Endothelial cell of umbilical vein (primary cell): ENCODE measurements at regions of chr7 and their contacts with region 1.

Region 1: GRCh38 chr7:64951250-64951848 is 39.5 kb downstream of the ZNF117 start:
- DNase-seq: peak; percentile 55
- H3K4me3 ChIP-seq: no peak overlapping the region
- H3K27ac ChIP-seq: no peak overlapping the region
- H3K4me1 ChIP-seq: no peaks in the 10 kb centered on the region
- H3K27me3 ChIP-seq: peaks cover 16 to 24% of the 10 kb centered on the region in 2 experiments
- CTCF ChIP-seq: peak; percentile 48 to 58
- POLR2A ChIP-seq: no peak

Region 2: DNA sequence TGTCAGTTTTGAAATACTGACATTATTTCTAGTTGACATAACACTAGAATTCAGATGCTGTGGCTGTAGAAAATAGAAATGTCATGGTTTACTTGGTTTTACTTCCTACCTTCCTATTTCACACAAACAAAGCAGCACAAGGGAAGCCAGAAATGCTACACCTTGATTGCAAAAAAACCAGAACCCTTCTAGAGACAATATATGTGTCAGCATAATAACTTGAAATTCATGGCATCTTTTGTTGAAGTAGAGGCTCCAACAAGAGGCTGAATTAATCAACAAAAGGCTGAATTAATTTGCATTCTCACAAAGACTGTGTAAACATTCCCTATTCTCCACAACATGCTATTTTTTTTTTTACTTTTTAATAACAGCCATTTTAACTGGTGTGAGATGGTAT is 14.2 kb after region 1 on chr7:
- CTCF ChIA-PET with region 1: no interaction called
- POLR2A ChIA-PET with region 1: no interaction called
- dilution Hi-C with region 1: no loop called
- intact Hi-C with region 1: no loop called
- DNase-seq: no peak
- H3K4me3 ChIP-seq: no peak overlapping the region
- H3K27ac ChIP-seq: no peak overlapping the region
- H3K4me1 ChIP-seq: no peaks in the 10 kb centered on the region
- H3K27me3 ChIP-seq: no peaks in the 10 kb centered on the region
- CTCF ChIP-seq: no peak
- POLR2A ChIP-seq: no peak

Region 3: GRCh38 chr7:65307651-65308299 is 356.4 kb after region 1 on chr7:
- CTCF ChIA-PET with region 1: interaction called, 68 read pairs
- POLR2A ChIA-PET with region 1: no interaction called
- dilution Hi-C with region 1: no loop called
- intact Hi-C with region 1: loop called (anchors 1 kb)
- DNase-seq: peak; percentile 68
- H3K4me3 ChIP-seq: no peak overlapping the region
- H3K27ac ChIP-seq: no peak overlapping the region
- H3K4me1 ChIP-seq: no peaks in the 10 kb centered on the region
- H3K27me3 ChIP-seq: peaks cover 0 to 1% of the 10 kb centered on the region in 2 experiments
- CTCF ChIP-seq: peak; percentile 65 to 79
- POLR2A ChIP-seq: no peak